IMR-90 (cell line): ENCODE measurements at regions of chr3 and their contacts with region 1.

Region 1: DNA sequence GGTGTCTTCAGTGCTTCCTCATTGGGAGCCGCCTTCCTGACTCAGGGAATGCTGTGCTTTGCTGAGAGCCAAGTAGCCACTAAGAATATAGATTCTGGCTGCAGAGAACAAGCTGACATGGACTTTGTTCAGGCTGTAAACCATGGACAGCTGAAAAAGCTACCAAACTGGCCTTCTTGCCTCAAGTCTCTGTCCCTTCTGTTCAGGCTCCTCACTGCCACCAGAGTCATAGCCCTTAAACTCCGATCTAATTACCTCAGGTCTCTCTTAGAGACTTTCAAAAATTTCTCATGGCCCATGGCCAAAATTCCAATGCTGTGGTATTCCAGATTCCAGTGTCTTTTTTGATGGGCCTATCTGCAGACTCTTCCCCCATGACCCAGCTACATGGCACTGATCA is 19.4 kb upstream of the PTX3 start:
- DNase-seq: no peak
- ATAC-seq: peak; percentile 27
- H3K4me3 ChIP-seq: no peak overlapping the region
- H3K27ac ChIP-seq: no peak overlapping the region
- H3K4me1 ChIP-seq: no peaks in the 10 kb centered on the region
- H3K27me3 ChIP-seq: no peaks in the 10 kb centered on the region
- CTCF ChIP-seq: no peak
- POLR2A ChIP-seq: no peak
- RAD21 ChIP-seq: no peak

Region 2: GRCh38 chr3:157369727-157370421 is 47.4 kb before region 1 on chr3:
- CTCF ChIA-PET with region 1: no interaction called
- POLR2A ChIA-PET with region 1: no interaction called
- dilution Hi-C with region 1: no loop called
- in situ Hi-C with region 1: no loop called
- intact Hi-C with region 1: loop called (anchors 5 kb)
- DNase-seq: no peak
- ATAC-seq: no peak
- H3K4me3 ChIP-seq: no peak overlapping the region
- H3K27ac ChIP-seq: no peak overlapping the region
- H3K4me1 ChIP-seq: peaks cover 2% of the 10 kb centered on the region; the same call in 1 of the 2 replicates
- H3K27me3 ChIP-seq: no peaks in the 10 kb centered on the region
- CTCF ChIP-seq: no peak
- POLR2A ChIP-seq: no peak
- RAD21 ChIP-seq: no peak